Aorta (tissue), 5 donors: ENCODE measurements at regions of chr17 and their contacts with region 1.

Region 1: GRCh38 chr17:55264645-55265298 is at the start of gene HLF:
- DNase-seq: peak; percentile 83 to 94
- ATAC-seq: peak; percentile 93
- H3K4me3 ChIP-seq: peak within 1 kb of the TSS; percentile 77 to 79
- H3K27ac ChIP-seq: peak within 1 kb of the TSS; percentile 31 to 66
- H3K4me1 ChIP-seq: peaks cover 2 to 6% of the 10 kb centered on the region in 2 donors
- H3K27me3 ChIP-seq: no peaks in the 10 kb centered on the region
- total RNA-seq, gene HLF: 5.8 to 12.4 TPM

Region 2: GRCh38 chr17:55238179-55238930 is 26.4 kb before region 1 on chr17:
- intact Hi-C with region 1: loop called in 1 of 2 experiments (anchors 2 kb)
- DNase-seq: peak; percentile 94 to 97
- ATAC-seq: peak; percentile 99
- H3K4me3 ChIP-seq: peak overlapping the region; percentile 36 to 63
- H3K27ac ChIP-seq: peak overlapping the region in 1 of 2 donors; percentile 5
- H3K4me1 ChIP-seq: no peaks in the 10 kb centered on the region
- H3K27me3 ChIP-seq: no peaks in the 10 kb centered on the region

Region 3: DNA sequence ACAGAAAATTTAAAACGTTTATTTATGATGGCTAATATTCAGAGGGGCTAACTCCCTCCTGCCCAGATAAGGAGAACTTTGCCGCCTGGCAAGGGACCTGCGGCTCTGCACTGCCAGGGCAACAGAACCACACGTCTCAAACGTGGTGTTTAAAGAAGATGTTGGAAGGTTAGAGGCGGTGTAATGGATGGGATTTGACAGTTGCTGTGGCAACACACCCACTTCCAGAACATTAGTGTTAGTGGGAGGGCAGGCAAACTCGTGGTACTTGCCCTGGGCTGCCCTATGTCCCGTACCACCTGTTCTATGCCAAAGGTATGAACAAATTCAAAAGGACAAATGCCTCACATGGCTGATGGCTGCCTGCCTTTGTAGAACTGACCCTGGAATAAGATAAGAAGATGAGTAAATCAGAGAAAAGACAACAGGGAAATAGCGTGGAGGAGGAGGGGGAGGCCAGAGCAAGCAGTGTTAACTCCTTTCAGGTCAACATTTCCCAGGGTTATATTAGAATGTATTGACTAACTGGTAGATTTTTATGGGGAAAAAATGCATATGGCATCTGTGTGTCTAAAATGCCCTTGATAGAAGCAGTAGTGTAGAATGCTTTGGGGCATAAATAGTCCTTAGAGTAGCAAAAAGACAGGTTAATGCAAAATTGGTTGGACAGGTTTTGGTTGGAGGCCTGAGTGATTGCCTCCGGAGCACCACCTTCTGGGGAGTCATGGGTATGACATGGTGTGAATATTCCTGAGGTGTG is 30.8 kb after region 1 on chr17:
- intact Hi-C with region 1: loop called (anchors 2 to 5 kb)
- DNase-seq: no peak
- ATAC-seq: peak; percentile 88
- H3K4me3 ChIP-seq: no peak overlapping the region
- H3K27ac ChIP-seq: peak overlapping the region; percentile 69 to 77
- H3K4me1 ChIP-seq: peaks cover 0 to 4% of the 10 kb centered on the region in 2 donors
- H3K27me3 ChIP-seq: no peaks in the 10 kb centered on the region